ENCODE measurements at regions of chr18 and their contacts with region 1.

Region 1: DNA sequence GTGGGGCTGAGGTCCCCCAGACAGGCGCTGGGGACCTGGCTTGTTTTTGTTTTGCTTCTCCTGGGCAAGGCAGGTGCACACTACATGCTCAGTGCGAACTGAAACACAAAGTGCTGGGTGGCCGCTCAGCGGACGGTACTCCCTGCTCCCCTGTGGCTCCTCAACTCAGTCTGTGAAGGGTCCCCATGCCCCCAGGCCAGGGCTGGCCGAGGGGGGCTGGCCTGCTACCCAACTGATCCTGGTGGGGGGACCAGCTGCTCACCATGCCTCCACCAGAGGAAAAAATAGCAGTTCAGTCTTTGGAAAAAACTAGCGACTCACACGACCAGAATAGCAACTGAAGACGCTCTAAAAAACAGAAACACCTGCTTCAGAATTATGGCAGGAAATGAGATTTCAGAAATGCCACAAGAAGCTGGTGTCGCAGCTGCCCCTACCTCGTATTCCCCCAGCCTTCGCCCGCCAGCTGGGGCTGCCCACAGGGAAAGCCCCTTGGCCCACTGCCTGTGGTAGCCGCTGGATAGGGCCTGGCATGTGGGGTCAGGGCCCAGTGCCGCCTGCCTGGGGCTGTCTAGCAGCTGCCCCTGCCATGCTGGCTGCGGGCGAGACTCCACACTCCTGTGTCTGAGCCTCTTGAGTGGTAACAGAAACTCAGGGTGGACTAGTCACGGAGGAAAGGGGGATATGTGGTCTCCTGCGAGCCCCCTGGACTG is 43.7 kb downstream of the MEX3C start:
- DNase-seq: peak; percentile 35 to 65 (median 55)
- ATAC-seq: peak; percentile 76
- H3K4me3 ChIP-seq: peak overlapping the region; percentile 52
- H3K4me3 Mint-ChIP-seq: peak overlapping the region; percentile 80 to 96 (median 87)
- H3K27ac ChIP-seq: peak overlapping the region; percentile 61
- H3K27ac Mint-ChIP-seq: peak overlapping the region; percentile 91 to 98 (median 94)
- H3K4me1 ChIP-seq: peaks cover 22 to 23% of the 10 kb centered on the region in 2 donors
- H3K4me1 Mint-ChIP-seq: peaks cover 19 to 44% (median 37%) of the 10 kb centered on the region in 7 donors
- H3K27me3 ChIP-seq: no peaks in the 10 kb centered on the region
- H3K27me3 Mint-ChIP-seq: no peaks in the 10 kb centered on the region

Region 2: DNA sequence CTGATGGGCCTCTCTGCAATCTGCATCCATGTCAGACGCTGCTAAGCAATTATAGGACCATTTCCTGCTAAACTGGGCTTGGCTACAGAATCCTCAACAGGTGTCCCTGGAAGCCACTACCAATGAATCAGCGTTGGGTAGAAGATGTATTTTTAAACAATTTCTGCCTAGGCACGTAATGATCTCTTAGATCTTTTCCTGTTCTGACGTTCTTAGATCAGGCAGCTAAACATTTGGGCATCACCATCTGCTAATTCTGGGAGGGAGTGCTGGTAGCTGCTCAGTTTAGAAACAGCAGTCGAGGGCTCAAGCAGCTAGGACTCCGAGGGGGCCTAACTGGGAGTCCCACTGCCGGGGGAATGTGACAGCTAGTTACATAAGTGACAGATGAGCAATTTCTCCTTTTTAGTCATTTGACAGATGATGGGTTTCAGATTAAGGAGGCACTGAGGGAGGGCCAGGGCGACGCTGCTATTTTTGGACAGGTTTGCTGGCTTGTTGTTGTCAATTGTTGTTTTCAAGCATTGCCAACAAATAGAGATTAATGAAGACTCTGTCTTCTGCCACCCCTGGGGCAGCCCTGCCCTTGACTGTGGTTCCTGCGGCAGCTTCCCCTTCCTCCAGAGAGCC is 426.7 kb before region 1 on chr18:
- CTCF ChIA-PET with region 1: no interaction called
- POLR2A ChIA-PET with region 1: no interaction called
- intact Hi-C with region 1: no loop called
- DNase-seq: no peak
- ATAC-seq: no peak
- H3K4me3 ChIP-seq: no peak overlapping the region
- H3K4me3 Mint-ChIP-seq: no peak overlapping the region
- H3K27ac ChIP-seq: no peak overlapping the region
- H3K27ac Mint-ChIP-seq: no peak overlapping the region
- H3K4me1 ChIP-seq: no peaks in the 10 kb centered on the region
- H3K4me1 Mint-ChIP-seq: no peaks in the 10 kb centered on the region
- H3K27me3 ChIP-seq: no peaks in the 10 kb centered on the region
- H3K27me3 Mint-ChIP-seq: peaks cover 0 to 11% (median 3%) of the 10 kb centered on the region in 5 donors

Region 3: GRCh38 chr18:51029694-51030536 is 123.9 kb before region 1 on chr18 and contains the start of gene SMAD4:
- CTCF ChIA-PET with region 1: no interaction called
- POLR2A ChIA-PET with region 1: interaction called, 15 read pairs
- intact Hi-C with region 1: loop called (anchors 5 kb)
- DNase-seq: peak; percentile 95 to 99 (median 97)
- ATAC-seq: peak; percentile 89
- H3K4me3 ChIP-seq: peak within 1 kb of the TSS; percentile 63
- H3K4me3 Mint-ChIP-seq: peak within 1 kb of the TSS; percentile 96 to 100 (median 99)
- H3K27ac ChIP-seq: peak within 1 kb of the TSS; percentile 81
- H3K27ac Mint-ChIP-seq: peak within 1 kb of the TSS; percentile 95 to 100 (median 98)
- H3K4me1 ChIP-seq: peaks cover 13 to 40% of the 10 kb centered on the region in 2 donors
- H3K4me1 Mint-ChIP-seq: peaks cover 35 to 62% (median 57%) of the 10 kb centered on the region in 7 donors
- H3K27me3 ChIP-seq: no peaks in the 10 kb centered on the region
- H3K27me3 Mint-ChIP-seq: no peaks in the 10 kb centered on the region
- total RNA-seq, gene SMAD4: 82.5 to 170 (median 92.5) TPM

Region 4: GRCh38 chr18:51135795-51136194 is 18.0 kb before region 1 on chr18:
- CTCF ChIA-PET with region 1: no interaction called
- POLR2A ChIA-PET with region 1: no interaction called
- intact Hi-C with region 1: loop called in 1 of 2 experiments (anchors 1 kb)
- DNase-seq: peak in 4 of 9 donors; percentile 7 to 25 (median 16)
- ATAC-seq: peak; percentile 55
- H3K4me3 ChIP-seq: no peak overlapping the region
- H3K4me3 Mint-ChIP-seq: no peak overlapping the region
- H3K27ac ChIP-seq: no peak overlapping the region
- H3K27ac Mint-ChIP-seq: no peak overlapping the region
- H3K4me1 ChIP-seq: no peaks in the 10 kb centered on the region
- H3K4me1 Mint-ChIP-seq: no peaks in the 10 kb centered on the region
- H3K27me3 ChIP-seq: no peaks in the 10 kb centered on the region
- H3K27me3 Mint-ChIP-seq: no peaks in the 10 kb centered on the region

Region 5: DNA sequence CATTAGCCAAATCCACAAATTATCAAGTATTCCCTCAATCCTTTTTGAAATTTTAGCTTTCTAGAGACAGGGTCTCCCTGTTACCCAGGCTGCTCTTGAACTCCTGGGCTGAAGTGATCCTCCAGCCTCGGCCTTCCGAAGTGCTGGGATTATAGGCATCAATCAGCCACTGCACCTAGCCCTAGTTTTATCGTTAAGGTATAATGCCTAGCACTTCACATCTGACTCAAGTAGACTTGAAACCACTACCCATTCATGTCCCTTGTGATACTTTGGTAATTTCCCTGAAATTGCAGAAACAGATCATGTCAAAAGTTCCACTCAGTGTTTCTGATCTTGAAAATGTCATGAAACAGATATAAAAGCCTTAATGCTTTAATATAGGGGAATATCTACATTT is 17.4 kb after region 1 on chr18:
- CTCF ChIA-PET with region 1: interaction called, 4 read pairs
- POLR2A ChIA-PET with region 1: interaction called, 6 read pairs
- intact Hi-C with region 1: loop called in 1 of 2 experiments (anchors 1 kb)
- DNase-seq: no peak
- ATAC-seq: no peak
- H3K4me3 ChIP-seq: no peak overlapping the region
- H3K4me3 Mint-ChIP-seq: peak overlapping the region in 1 of 10 donors; percentile 44
- H3K27ac ChIP-seq: no peak overlapping the region
- H3K27ac Mint-ChIP-seq: peak overlapping the region in 5 of 9 donors; percentile 25 to 83 (median 46)
- H3K4me1 ChIP-seq: no peaks in the 10 kb centered on the region
- H3K4me1 Mint-ChIP-seq: peaks cover under 1 to 66% (median 31%) of the 10 kb centered on the region in 7 donors
- H3K27me3 ChIP-seq: no peaks in the 10 kb centered on the region
- H3K27me3 Mint-ChIP-seq: no peaks in the 10 kb centered on the region